H1 (cell line): ENCODE measurements at regions of chr5 and their contacts with region 1.

Region 1: GRCh38 chr5:154467655-154468354 is 10.2 kb downstream of the HAND1 start:
- DNase-seq: peak in 1 of 2 experiments; percentile 96
- H3K4me3 ChIP-seq: no peak overlapping the region
- H3K27ac ChIP-seq: no peak overlapping the region
- H3K4me1 ChIP-seq: peaks cover 0 to 6% (median 4%) of the 10 kb centered on the region in 4 experiments; a peak in 5 of 7 replicates
- H3K27me3 ChIP-seq: peaks cover 37 to 57% (median 48%) of the 10 kb centered on the region in 4 experiments
- CTCF ChIP-seq: peak; percentile 95 to 96 (median 95)
- EP300 ChIP-seq: no peak
- POLR2A ChIP-seq: no peak
- RAD21 ChIP-seq: peak; percentile 91 to 92

Region 2: GRCh38 chr5:154421868-154422267 is 45.9 kb before region 1 on chr5:
- CTCF ChIA-PET with region 1: interaction called, 14 read pairs
- POLR2A ChIA-PET with region 1: no interaction called
- DNase-seq: no peak
- H3K4me3 ChIP-seq: no peak overlapping the region
- H3K27ac ChIP-seq: no peak overlapping the region
- H3K4me1 ChIP-seq: peaks cover 0 to 4% (median 0%) of the 10 kb centered on the region in 4 experiments; a peak in 1 of 7 replicates
- H3K27me3 ChIP-seq: no peaks in the 10 kb centered on the region
- CTCF ChIP-seq: peak; percentile 71 to 83 (median 77)
- EP300 ChIP-seq: no peak
- POLR2A ChIP-seq: no peak
- RAD21 ChIP-seq: peak; percentile 87 to 88

Region 3: DNA sequence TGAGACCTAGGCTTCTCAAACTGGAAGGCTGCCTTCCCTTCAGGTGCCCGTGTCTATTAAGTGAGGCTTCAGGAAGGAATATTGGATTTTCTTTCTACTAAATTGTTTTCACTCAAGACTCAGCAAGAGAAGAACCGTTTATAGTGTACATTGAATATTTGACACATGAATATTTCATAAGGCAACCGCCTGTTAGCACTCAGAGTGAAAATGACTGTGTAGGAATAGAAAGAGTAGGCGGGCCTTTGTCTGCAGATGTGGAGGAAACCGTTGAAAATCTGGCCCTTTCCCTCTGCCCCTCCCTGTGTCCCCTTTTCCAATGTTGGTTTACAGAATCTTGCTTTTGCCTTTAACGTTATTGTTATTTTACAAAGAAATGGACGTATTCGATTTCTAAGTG is 15.8 kb before region 1 on chr5:
- CTCF ChIA-PET with region 1: interaction called, 67 read pairs
- POLR2A ChIA-PET with region 1: no interaction called
- DNase-seq: no peak
- H3K4me3 ChIP-seq: no peak overlapping the region
- H3K27ac ChIP-seq: no peak overlapping the region
- H3K4me1 ChIP-seq: peaks cover 0 to 3% (median 0%) of the 10 kb centered on the region in 4 experiments; a peak in 2 of 7 replicates
- H3K27me3 ChIP-seq: peaks cover 0 to under 1% (median 0%) of the 10 kb centered on the region in 4 experiments; a peak in 1 of 7 replicates
- CTCF ChIP-seq: no peak
- EP300 ChIP-seq: no peak
- POLR2A ChIP-seq: no peak
- RAD21 ChIP-seq: no peak

Region 4: DNA sequence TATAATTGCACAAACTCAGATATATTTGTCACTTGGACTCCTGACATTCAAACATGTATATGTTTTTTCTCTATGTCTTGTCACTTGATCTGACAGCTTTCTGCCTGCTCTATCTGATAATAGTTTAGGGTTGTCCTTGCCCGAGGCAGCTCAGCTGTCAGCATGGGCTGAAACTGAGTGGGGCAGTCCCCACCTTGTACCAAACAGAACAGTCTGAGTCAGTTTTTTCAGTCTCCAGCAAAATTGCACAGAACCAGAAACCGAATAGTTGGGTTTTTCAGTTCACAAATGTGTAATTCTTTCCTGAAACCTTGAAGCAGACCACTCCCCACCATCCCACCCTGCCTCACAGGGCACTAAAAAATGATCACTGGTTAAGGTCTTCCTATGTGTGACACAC is 19.7 kb after region 1 on chr5:
- CTCF ChIA-PET with region 1: interaction called, 61 read pairs
- POLR2A ChIA-PET with region 1: interaction called, 16 read pairs
- DNase-seq: no peak
- H3K4me3 ChIP-seq: no peak overlapping the region
- H3K27ac ChIP-seq: no peak overlapping the region
- H3K4me1 ChIP-seq: peaks cover 10 to 29% (median 19%) of the 10 kb centered on the region in 4 experiments; a peak in 6 of 7 replicates
- H3K27me3 ChIP-seq: peaks cover 43 to 60% (median 54%) of the 10 kb centered on the region in 4 experiments
- CTCF ChIP-seq: no peak
- EP300 ChIP-seq: no peak
- POLR2A ChIP-seq: no peak
- RAD21 ChIP-seq: no peak

Region 5: DNA sequence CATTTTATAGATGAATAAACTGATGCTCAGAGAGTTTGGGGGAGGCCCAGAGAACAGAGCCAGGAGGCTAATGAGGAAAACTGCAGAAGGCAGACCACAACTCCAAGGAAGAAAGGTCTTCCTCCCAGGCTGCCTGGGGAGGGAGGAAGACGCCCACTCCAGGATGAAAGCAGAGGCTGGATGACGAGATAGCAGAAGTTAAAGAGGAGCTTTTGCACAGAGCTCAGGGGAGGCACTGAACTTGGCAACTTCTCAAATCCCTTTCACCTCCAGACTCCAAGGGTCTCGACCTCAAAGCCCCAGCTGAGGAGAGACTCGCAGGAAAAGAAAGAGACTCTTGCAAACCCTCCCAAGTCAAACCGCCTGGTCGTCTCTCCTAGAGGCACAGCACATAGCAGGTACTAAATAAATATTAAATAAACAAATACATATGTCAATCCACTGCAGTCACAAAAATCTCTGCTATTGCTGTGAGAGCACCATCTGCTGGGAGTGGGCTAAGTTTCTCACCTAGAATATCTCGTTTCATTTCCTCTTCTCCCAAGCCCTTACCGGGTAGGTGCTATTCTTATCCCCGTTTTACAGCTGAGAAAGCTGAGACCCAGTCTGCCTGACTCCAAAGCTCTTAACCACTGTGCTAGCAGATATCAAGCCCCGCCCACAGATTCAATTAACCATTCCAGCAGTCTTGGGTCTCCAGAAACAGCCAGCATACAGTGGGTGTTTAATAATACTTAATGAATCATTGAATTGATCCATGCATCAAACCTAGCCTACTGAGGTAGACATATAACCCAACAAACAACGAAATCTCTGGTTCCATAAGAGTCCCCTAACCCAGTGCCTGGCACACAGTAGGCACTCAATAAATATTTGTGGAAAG is 108.0 kb after region 1 on chr5:
- CTCF ChIA-PET with region 1: interaction called, 44 read pairs
- POLR2A ChIA-PET with region 1: no interaction called
- DNase-seq: no peak
- H3K4me3 ChIP-seq: no peak overlapping the region
- H3K27ac ChIP-seq: no peak overlapping the region
- H3K4me1 ChIP-seq: no peaks in the 10 kb centered on the region; a peak in 1 of 7 replicates
- H3K27me3 ChIP-seq: peaks cover 0 to 4% (median 0%) of the 10 kb centered on the region in 4 experiments; a peak in 5 of 7 replicates
- CTCF ChIP-seq: peak in 2 of 3 experiments; percentile 11 to 24; a peak in 1 of 4 replicates
- EP300 ChIP-seq: no peak
- POLR2A ChIP-seq: no peak
- RAD21 ChIP-seq: peak in 1 of 2 experiments; percentile 26; a peak in 3 of 4 replicates

Region 6: DNA sequence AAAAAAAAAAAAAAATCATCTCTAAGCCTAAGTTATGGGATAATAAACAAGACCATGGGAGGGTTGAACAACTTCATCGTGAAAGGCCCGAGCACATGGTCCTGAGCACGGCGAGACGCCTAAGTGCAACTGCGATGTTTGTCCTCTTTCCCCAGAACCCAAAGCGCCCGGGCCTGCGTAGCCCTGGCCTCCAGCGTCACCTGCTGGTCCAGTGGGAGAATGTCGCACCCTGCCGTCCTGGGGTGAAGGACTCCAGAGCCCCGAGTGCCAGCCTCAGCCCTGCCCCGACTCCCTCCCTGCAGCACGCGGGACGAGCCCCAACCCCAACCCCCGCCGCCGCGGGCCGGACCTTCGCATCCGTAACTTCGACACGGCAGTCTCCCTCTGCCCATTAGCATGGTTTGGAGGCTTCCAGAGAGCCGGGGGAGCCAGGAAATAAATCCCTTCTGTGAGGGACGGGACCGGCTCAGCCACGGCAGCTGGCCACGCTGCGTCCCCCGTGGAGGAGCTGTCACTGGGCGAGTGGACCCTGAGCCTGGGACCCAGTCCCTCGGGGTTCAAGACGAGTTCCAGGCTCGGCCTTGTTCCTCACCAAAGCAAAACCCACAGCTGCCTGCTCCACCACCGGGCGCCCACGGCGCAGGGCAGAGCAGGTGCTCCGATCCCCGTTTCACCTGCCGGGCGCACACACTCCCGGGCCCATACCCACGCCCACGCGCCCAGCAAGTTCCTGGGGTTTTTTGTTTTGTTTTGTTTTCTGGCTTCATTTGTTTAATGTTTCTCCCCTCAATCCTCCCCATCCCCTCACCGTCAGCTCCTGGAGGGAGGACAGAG is 142.7 kb after region 1 on chr5:
- CTCF ChIA-PET with region 1: interaction called, 273 read pairs
- POLR2A ChIA-PET with region 1: interaction called, 5 read pairs
- DNase-seq: peak; percentile 75 to 93
- H3K4me3 ChIP-seq: peak overlapping the region; percentile 4 to 75 (median 50); a peak in 7 of 8 replicates
- H3K27ac ChIP-seq: no peak overlapping the region
- H3K4me1 ChIP-seq: peaks cover 6 to 8% (median 8%) of the 10 kb centered on the region in 4 experiments; a peak in 6 of 7 replicates
- H3K27me3 ChIP-seq: peaks cover 9 to 36% (median 33%) of the 10 kb centered on the region in 4 experiments
- CTCF ChIP-seq: peak; percentile 98 to 100 (median 98)
- EP300 ChIP-seq: 0 out of 3 replicates have a peak, but pooled peaks of 1 of the 2 experiments have one; percentile 47
- POLR2A ChIP-seq: no peak
- RAD21 ChIP-seq: peak; percentile 100